Activated CD8-positive, alpha-beta T cell treated with anti-CD3 and anti-CD28 coated beads for 36 hours (primary cell): ENCODE measurements at regions of chr16 and their contacts with region 1.

Region 1: DNA sequence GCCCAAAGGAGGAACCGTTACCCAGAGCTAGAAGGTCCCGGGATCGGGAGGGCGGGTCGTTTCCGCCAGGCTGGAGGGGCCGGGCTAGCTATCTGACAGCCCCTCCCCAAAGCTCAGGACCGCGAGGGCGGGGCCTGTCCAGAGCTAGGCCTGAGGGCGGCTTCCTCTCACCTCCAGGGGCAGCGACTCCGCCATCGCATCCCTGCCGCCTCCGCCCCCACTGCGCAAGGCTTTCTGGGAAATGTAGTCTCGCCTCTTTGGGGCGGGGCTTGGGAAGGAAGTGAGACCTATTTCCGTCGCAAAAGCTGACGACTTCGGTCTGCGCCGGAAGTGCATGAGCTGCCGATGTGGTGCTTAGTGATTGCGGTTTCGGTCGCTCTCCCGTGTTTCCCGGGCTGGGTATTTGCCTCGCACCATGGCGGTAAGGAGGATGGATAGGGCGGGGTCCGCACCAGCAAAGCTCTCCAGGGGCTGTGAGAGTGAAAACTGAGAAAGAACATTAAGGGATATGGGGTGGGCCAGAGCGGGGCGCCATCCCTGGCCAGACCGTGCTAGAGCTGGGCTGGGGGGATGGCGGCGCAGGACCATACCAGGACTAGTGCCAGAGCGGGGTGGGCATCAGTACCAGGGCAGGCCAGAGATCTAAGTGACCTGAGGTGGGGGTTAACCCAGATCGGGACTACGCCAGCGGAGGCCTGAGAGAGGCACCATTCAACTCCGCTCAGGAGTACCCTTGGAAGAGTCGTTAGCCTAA is at the start of gene TMEM208:
- DNase-seq: peak; percentile 99
- ATAC-seq: peak; percentile 97
- H3K4me3 Mint-ChIP-seq: peak within 1 kb of the TSS; percentile 100
- H3K27ac Mint-ChIP-seq: peak within 1 kb of the TSS; percentile 100
- H3K4me1 Mint-ChIP-seq: peaks cover 38% of the 10 kb centered on the region
- H3K27me3 Mint-ChIP-seq: no peaks in the 10 kb centered on the region
- CTCF ChIP-seq: no peak
- total RNA-seq, gene TMEM208: 25.7 to 30.7 TPM

Region 2: DNA sequence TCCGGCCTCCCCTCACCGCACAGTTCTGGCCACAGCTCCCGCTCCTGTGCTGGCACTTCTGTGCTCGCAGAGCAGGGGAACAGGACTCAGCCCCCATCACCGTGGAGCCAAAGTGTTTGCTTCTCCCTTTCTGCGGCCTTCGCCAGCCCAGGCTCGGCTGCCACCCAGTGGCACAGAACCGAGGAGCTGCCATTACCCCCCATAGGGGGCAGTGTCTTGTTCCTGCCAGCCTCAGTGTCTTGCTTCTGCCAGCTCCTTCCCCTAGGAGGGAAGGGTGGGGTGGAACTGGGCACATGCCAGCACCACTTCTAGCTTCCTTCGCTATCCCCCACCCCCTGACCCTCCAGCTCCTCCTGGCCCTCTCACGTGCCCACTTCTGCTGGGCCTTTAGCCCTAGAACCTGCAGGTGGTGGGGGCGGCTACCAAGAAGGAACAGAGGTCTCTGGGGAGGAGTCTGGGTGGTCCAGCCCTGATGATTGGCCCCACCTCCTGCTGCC is 28.7 kb before region 1 on chr16:
- CTCF ChIA-PET with region 1: interaction called, 6 read pairs
- POLR2A ChIA-PET with region 1: interaction called, 10 read pairs
- intact Hi-C with region 1: no loop called
- DNase-seq: peak; percentile 42
- ATAC-seq: peak; percentile 67
- H3K4me3 Mint-ChIP-seq: no peak overlapping the region
- H3K27ac Mint-ChIP-seq: no peak overlapping the region
- H3K4me1 Mint-ChIP-seq: peaks cover 33% of the 10 kb centered on the region
- H3K27me3 Mint-ChIP-seq: no peaks in the 10 kb centered on the region
- CTCF ChIP-seq: peak; percentile 68

Region 3: DNA sequence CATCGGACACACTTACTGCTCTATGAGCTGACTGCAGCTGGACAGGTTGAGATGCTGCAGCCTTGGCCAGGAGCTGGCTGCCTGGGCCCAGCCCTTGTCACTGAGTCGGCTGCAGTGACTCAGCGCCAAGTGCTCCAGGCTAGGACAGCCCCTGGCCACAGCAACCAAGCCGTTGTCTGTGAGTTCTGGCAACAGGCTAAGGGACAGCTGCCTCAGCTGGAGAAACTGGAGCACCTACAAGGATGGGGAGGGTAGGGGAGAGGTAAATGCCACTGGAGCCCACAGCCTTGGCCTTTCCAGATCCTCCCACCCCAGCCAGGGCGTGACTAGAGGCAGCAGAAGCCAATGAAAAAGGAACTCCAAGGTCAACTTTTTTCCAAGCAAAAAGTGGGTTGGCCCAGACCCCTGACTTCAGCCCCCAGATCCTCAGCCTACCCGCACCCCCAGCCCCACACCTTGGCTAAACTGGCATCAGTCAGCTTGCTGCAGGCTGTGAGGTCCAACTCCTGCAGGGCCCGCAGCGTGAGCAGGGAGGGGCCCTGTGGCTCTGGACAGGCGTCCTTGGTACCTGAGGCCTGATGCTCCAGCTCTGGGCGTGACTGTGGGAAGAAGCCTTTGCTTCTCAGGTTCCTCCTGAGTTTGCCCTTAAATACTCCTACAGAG is 19.0 kb before region 1 on chr16:
- CTCF ChIA-PET with region 1: interaction called, 5 read pairs
- POLR2A ChIA-PET with region 1: interaction called, 10 read pairs
- intact Hi-C with region 1: no loop called
- DNase-seq: no peak
- ATAC-seq: no peak
- H3K4me3 Mint-ChIP-seq: no peak overlapping the region
- H3K27ac Mint-ChIP-seq: no peak overlapping the region
- H3K4me1 Mint-ChIP-seq: no peaks in the 10 kb centered on the region
- H3K27me3 Mint-ChIP-seq: no peaks in the 10 kb centered on the region
- CTCF ChIP-seq: no peak

Region 4: GRCh38 chr16:67246934-67247697 is 20.1 kb after region 1 on chr16 and contains the start of gene FHOD1:
- CTCF ChIA-PET with region 1: interaction called, 13 read pairs
- POLR2A ChIA-PET with region 1: interaction called, 123 read pairs
- intact Hi-C with region 1: no loop called
- DNase-seq: peak; percentile 99
- ATAC-seq: peak; percentile 72
- H3K4me3 Mint-ChIP-seq: peak within 1 kb of the TSS; percentile 89
- H3K27ac Mint-ChIP-seq: peak within 1 kb of the TSS; percentile 89
- H3K4me1 Mint-ChIP-seq: peaks cover 48% of the 10 kb centered on the region
- H3K27me3 Mint-ChIP-seq: no peaks in the 10 kb centered on the region
- CTCF ChIP-seq: no peak
- total RNA-seq, gene FHOD1: 102 to 105 TPM

Region 5: DNA sequence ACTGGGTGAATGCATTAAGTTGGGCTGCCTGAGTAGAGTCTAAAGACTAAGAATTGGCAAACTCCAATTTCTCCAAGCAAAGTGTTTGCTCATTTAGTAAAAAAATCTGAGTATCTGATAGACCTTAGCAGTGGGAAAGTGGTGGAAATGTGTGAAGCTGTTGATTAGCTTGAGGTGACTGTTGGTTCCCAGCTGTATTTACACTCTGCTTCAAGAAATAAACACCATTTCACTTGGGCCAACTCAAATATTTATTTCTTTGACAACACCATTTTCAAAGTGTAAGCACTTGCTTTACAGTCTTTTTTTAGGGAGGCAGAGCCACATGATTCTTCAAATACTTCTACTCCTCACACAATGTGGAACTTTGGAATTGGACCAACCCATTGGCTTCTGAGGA is 90.9 kb after region 1 on chr16:
- CTCF ChIA-PET with region 1: no interaction called
- POLR2A ChIA-PET with region 1: no interaction called
- intact Hi-C with region 1: no loop called
- DNase-seq: no peak
- ATAC-seq: no peak
- H3K4me3 Mint-ChIP-seq: no peak overlapping the region
- H3K27ac Mint-ChIP-seq: no peak overlapping the region
- H3K4me1 Mint-ChIP-seq: peaks cover 10% of the 10 kb centered on the region
- H3K27me3 Mint-ChIP-seq: peaks cover 22% of the 10 kb centered on the region
- CTCF ChIP-seq: no peak